ENCODE measurements at regions of chr6 and their contacts with region 1.

Region 1: GRCh38 chr6:84428300-84428907 is 201.0 kb upstream of the CEP162 start:
- DNase-seq: peak; percentile 24
- H3K4me3 ChIP-seq: no peak overlapping the region
- H3K27ac ChIP-seq: no peak overlapping the region
- H3K4me1 ChIP-seq: no peaks in the 10 kb centered on the region
- H3K27me3 ChIP-seq: peaks cover 7% of the 10 kb centered on the region
- CTCF ChIP-seq: peak; percentile 77 to 87

Region 2: DNA sequence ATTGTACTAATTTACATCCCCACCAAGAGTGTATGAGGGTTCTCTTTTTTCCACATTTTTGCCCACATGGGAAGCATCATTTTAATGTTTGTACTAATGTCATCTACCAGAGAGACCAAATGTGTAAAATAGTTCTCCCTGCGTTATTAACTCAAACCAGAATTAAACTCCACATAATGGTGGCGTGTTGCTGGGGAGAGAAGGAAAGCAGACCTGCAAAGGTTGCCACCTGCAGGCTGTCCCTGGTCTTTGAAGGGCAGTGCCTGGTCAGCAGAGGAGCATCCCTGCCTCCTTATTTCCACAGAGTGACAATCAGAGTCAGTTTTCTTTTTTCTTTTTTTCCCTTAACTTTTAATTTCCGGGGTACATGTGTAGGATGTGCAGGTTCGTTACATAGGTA is 121.5 kb after region 1 on chr6:
- CTCF ChIA-PET with region 1: no interaction called
- dilution Hi-C with region 1: no loop called
- in situ Hi-C with region 1: no loop called
- intact Hi-C with region 1: loop called (anchors 5 kb)
- DNase-seq: no peak
- H3K4me3 ChIP-seq: no peak overlapping the region
- H3K27ac ChIP-seq: no peak overlapping the region
- H3K4me1 ChIP-seq: no peaks in the 10 kb centered on the region
- H3K27me3 ChIP-seq: no peaks in the 10 kb centered on the region
- CTCF ChIP-seq: no peak

Region 3: DNA sequence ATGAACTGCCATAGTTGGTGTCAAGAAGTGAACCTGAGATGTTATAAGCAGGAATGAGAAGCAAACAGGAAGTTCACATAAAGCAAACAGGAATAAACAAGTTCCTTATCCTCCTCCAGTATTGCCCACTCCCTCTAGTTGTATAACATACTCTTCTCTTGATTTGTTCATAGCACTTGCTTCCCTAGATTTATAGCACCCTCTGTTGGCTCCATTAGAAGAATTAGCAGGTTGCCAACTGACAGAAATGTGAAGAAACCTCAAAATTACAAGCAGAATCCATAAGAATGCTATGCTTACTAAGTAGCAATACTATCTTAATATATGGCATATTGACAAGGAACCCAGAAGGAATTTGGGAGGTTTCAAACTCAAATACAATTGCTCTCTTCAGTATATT is 140.6 kb after region 1 on chr6:
- CTCF ChIA-PET with region 1: no interaction called
- dilution Hi-C with region 1: no loop called
- in situ Hi-C with region 1: no loop called
- intact Hi-C with region 1: loop called (anchors 2 kb)
- DNase-seq: peak; percentile 14
- H3K4me3 ChIP-seq: no peak overlapping the region
- H3K27ac ChIP-seq: no peak overlapping the region
- H3K4me1 ChIP-seq: no peaks in the 10 kb centered on the region
- H3K27me3 ChIP-seq: no peaks in the 10 kb centered on the region
- CTCF ChIP-seq: peak in 1 of 2 donors; percentile 45

Region 4: DNA sequence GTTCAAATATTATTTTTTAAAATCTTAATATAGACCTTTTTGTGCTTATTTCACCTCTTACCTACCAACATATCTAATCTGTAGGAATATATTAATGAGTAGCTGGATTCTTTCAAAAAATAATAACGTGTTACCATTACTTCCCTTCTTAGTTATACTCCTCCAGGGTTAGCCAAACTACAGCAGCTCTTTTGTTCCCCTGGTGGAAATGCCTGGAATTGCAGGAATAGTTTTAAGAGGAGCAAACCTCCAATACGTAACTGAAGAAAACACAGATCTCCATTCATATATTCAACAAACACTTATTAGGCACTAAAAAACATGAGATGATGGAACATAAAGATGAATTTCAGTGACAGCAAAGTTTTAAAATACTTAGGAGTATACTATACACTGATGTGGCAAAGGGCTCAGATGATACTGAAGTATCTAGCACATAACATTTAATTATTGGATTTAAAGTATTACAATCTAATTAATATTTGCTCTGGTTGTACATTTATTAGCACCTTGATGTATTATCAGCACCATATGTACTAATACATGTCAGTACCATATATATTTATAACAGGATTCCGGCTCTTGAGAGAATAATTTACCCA is 257.7 kb after region 1 on chr6:
- CTCF ChIA-PET with region 1: no interaction called
- dilution Hi-C with region 1: loop called (anchors 10 kb)
- in situ Hi-C with region 1: loop called in 1 of 2 experiments (anchors 10 kb)
- intact Hi-C with region 1: loop called (anchors 1 kb)
- DNase-seq: peak; percentile 6
- H3K4me3 ChIP-seq: no peak overlapping the region
- H3K27ac ChIP-seq: no peak overlapping the region
- H3K4me1 ChIP-seq: no peaks in the 10 kb centered on the region
- H3K27me3 ChIP-seq: no peaks in the 10 kb centered on the region
- CTCF ChIP-seq: peak; percentile 57 to 61

Region 5: GRCh38 chr6:84774157-84774984 is 346.0 kb after region 1 on chr6:
- CTCF ChIA-PET with region 1: no interaction called
- dilution Hi-C with region 1: no loop called
- in situ Hi-C with region 1: no loop called
- intact Hi-C with region 1: loop called (anchors 1 kb)
- DNase-seq: peak; percentile 47
- H3K4me3 ChIP-seq: peak overlapping the region in 1 of 3 experiments; percentile 33
- H3K27ac ChIP-seq: no peak overlapping the region
- H3K4me1 ChIP-seq: peaks cover 13% of the 10 kb centered on the region
- H3K27me3 ChIP-seq: peaks cover 47% of the 10 kb centered on the region
- CTCF ChIP-seq: peak; percentile 37 to 62

Measured in mammary epithelial cell (primary cell).